Activated B cell treated with CpG ODN at 0.5 μM for 24 hours (primary cell): ENCODE measurements at regions of chr3 and their contacts with region 1.

Region 1: DNA sequence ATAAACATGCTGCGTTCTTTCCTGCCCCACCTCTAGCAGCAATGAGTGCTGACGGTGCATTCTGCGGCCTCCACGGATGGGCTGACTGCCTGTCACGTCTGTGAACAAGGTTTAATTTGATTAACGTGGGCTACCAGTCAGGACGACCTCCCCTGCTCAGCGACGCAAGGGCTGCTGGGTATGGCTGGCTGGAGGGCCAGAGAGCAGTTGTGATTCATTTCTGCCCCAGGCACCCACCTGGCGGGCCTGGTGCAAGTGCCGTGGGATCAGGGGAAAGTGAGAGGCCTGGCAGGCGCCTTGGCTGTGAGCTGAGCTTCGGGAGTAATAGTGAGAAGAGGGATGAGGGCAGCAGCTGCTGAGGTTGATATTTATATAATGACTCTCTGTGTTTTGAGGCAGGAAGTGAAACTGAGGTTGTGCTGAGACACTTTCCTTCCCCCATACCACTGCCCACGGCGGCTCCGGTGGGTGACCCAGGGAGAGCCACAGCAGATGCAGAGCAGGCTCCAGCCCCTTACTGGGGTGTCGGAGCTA is 190.4 kb upstream of the BCL6 start:
- DNase-seq: peak; percentile 61
- ATAC-seq: peak; percentile 91
- H3K4me3 Mint-ChIP-seq: peak overlapping the region; percentile 77
- H3K27ac Mint-ChIP-seq: peak overlapping the region; percentile 90
- H3K4me1 Mint-ChIP-seq: peaks cover 31% of the 10 kb centered on the region
- H3K27me3 Mint-ChIP-seq: peaks cover 33% of the 10 kb centered on the region
- CTCF ChIP-seq: no peak

Region 2: GRCh38 chr3:187902041-187902471 is 33.6 kb before region 1 on chr3:
- CTCF ChIA-PET with region 1: no interaction called
- POLR2A ChIA-PET with region 1: no interaction called
- intact Hi-C with region 1: loop called (anchors 2 kb)
- DNase-seq: peak; percentile 22
- ATAC-seq: peak; percentile 86
- H3K4me3 Mint-ChIP-seq: peak overlapping the region; percentile 29
- H3K27ac Mint-ChIP-seq: peak overlapping the region; percentile 1
- H3K4me1 Mint-ChIP-seq: peaks cover 16% of the 10 kb centered on the region
- H3K27me3 Mint-ChIP-seq: peaks cover 26% of the 10 kb centered on the region
- CTCF ChIP-seq: no peak

Region 3: GRCh38 chr3:187919048-187919447 is 16.6 kb before region 1 on chr3:
- CTCF ChIA-PET with region 1: no interaction called
- POLR2A ChIA-PET with region 1: interaction called, 8 read pairs
- intact Hi-C with region 1: loop called (anchors 2 kb)
- DNase-seq: peak; percentile 36
- ATAC-seq: peak; percentile 89
- H3K4me3 Mint-ChIP-seq: peak overlapping the region; percentile 77
- H3K27ac Mint-ChIP-seq: peak overlapping the region; percentile 86
- H3K4me1 Mint-ChIP-seq: peaks cover 32% of the 10 kb centered on the region
- H3K27me3 Mint-ChIP-seq: peaks cover 15% of the 10 kb centered on the region
- CTCF ChIP-seq: no peak

Region 4: DNA sequence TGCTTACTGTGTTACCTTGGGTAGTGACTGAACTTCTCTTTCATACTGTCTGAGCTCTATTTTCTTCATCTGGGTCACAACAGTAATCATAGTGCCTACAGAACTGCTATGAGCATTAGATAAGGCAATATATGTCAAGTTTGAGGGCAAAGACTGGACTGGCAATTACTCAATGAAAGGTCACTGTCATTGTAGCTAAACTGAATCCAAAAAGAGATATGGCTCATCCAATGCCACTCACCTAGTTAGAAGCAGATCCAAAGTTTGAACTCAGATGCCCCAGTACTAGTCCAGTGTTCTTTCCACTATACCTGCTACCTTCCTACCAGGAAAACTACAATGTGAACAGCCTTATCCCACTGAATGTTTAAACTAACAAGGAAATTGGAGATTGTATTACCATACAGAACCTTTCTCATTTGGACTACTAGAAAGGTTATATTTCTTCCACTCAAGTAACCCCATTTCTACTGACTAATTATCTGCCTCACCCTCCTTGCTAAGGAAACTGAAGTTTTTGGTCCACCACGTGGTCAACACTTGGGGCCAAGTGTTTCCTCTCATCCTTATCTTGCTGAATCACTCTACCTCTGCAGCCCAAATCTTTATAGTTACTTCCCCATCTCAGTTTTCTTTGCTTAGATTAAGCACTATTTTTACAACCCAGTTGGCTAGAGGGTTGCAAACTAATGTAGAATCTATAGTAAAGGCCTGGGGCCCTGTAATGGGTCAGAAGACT is 15.9 kb after region 1 on chr3:
- CTCF ChIA-PET with region 1: no interaction called
- POLR2A ChIA-PET with region 1: interaction called, 3 read pairs
- intact Hi-C with region 1: loop called (anchors 2 kb)
- DNase-seq: no peak
- ATAC-seq: peak; percentile 50
- H3K4me3 Mint-ChIP-seq: no peak overlapping the region
- H3K27ac Mint-ChIP-seq: no peak overlapping the region
- H3K4me1 Mint-ChIP-seq: peaks cover 26% of the 10 kb centered on the region
- H3K27me3 Mint-ChIP-seq: peaks cover 7% of the 10 kb centered on the region
- CTCF ChIP-seq: no peak

Region 5: GRCh38 chr3:188067932-188068331 is 132.2 kb after region 1 on chr3:
- CTCF ChIA-PET with region 1: no interaction called
- POLR2A ChIA-PET with region 1: no interaction called
- intact Hi-C with region 1: no loop called
- DNase-seq: no peak
- ATAC-seq: no peak
- H3K4me3 Mint-ChIP-seq: no peak overlapping the region
- H3K27ac Mint-ChIP-seq: no peak overlapping the region
- H3K4me1 Mint-ChIP-seq: no peaks in the 10 kb centered on the region
- H3K27me3 Mint-ChIP-seq: peaks cover 4% of the 10 kb centered on the region
- CTCF ChIP-seq: no peak